Esophagus muscularis mucosa (tissue), 4 donors: ENCODE measurements at regions of chr11 and their contacts with region 1.

Region 1: GRCh38 chr11:2885676-2886081 is at the start of gene CDKN1C:
- DNase-seq: peak; percentile 98
- H3K4me3 ChIP-seq: peak within 1 kb of the TSS; percentile 93 to 97 (median 95)
- H3K27ac ChIP-seq: peak within 1 kb of the TSS; percentile 91 to 96 (median 94)
- H3K4me1 ChIP-seq: peaks cover 34 to 76% (median 58%) of the 10 kb centered on the region in 4 donors
- H3K27me3 ChIP-seq: no peaks in the 10 kb centered on the region
- CTCF ChIP-seq: no peak
- EP300 ChIP-seq: no peak
- POLR2A ChIP-seq: peak; percentile 80
- total RNA-seq, gene CDKN1C: 153 to 349 (median 186) TPM

Region 2: DNA sequence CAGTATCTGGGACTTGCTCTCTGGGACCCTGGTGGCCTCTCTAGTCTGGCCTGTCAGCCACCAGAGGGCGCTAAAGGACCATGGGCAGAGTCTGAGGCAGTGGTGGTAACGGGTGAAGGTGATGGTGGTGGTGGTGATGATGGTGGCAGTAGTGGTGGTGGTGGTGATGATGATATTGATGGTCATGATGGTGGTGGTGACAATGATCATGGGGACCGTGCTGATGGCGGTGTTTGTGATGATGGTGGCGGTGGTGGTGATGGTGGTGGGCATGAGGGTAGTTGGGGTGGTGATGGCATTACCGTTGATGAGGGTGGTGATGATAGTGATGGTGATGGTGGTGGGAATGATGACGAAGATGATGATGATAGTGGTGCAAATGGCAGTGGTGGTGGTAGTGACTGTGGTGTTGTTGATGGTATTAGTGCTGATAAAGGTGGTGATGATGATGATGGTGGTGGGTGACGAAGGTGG is 457.3 kb before region 1 on chr11:
- intact Hi-C with region 1: loop called (anchors 5 kb)
- DNase-seq: no peak
- H3K4me3 ChIP-seq: no peak overlapping the region
- H3K27ac ChIP-seq: no peak overlapping the region
- H3K4me1 ChIP-seq: no peaks in the 10 kb centered on the region
- H3K27me3 ChIP-seq: peaks cover 0 to 35% (median 0%) of the 10 kb centered on the region in 4 donors
- CTCF ChIP-seq: peak; percentile 56 to 69 (median 66)
- EP300 ChIP-seq: no peak
- POLR2A ChIP-seq: no peak

Region 3: GRCh38 chr11:2561696-2562581 is 323.7 kb before region 1 on chr11:
- intact Hi-C with region 1: no loop called
- DNase-seq: no peak
- H3K4me3 ChIP-seq: no peak overlapping the region
- H3K27ac ChIP-seq: no peak overlapping the region
- H3K4me1 ChIP-seq: no peaks in the 10 kb centered on the region
- H3K27me3 ChIP-seq: no peaks in the 10 kb centered on the region
- CTCF ChIP-seq: no peak
- EP300 ChIP-seq: no peak
- POLR2A ChIP-seq: no peak

Region 4: DNA sequence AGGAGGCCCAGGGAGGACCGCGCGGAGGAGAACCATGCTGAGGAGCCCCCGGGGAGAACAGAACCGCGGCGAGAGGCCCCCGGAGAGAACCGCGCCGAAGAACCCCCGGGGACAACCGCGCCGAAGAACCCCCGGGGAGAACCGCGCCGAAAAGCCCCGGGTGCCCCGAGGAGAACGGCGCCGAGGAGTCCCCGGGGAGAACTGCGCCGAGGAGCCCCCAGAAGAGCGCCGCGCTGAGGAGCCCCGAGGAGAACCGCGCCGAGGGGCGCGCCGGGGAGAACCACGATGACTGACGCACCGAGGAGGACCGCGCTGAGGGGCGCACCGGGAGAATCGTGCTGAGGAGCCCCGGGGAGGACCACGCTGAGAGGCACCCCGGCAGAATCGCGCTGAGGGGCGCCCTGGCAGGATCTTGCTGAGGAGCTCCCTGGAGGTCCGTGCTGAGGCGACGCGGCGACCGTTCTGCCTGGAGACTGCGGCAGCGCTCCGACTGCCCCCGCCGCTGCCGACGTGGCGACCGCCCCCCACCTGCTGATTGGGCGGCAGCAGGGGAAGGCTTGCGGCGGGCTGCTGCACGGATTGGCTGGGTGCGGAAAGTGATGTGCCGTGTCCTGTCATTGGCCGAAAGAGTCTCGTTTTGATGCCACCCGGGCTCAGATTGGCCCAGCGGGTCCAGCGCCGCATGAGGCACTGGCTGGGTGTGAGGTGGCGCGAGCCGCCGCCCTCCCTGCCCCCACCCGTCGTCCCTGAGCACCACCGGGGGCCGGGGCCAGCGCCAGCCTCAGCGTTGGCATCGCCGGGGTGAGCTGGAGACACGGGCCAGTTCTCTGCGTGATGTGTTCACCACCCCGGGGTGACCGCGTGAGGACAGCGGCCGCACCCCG is 185.9 kb before region 1 on chr11 and contains the start of gene KCNQ1OT1:
- intact Hi-C with region 1: loop called (anchors 5 kb)
- DNase-seq: peak; percentile 96
- H3K4me3 ChIP-seq: peak within 1 kb of the TSS; percentile 59 to 85 (median 78)
- H3K27ac ChIP-seq: peak within 1 kb of the TSS; percentile 92 to 98 (median 94)
- H3K4me1 ChIP-seq: peaks cover 3 to 38% (median 36%) of the 10 kb centered on the region in 4 donors
- H3K27me3 ChIP-seq: no peaks in the 10 kb centered on the region
- CTCF ChIP-seq: no peak
- EP300 ChIP-seq: no peak
- POLR2A ChIP-seq: peak; percentile 73
- total RNA-seq, gene KCNQ1OT1: 0.66 to 2.5 (median 1.3) TPM

Region 5: DNA sequence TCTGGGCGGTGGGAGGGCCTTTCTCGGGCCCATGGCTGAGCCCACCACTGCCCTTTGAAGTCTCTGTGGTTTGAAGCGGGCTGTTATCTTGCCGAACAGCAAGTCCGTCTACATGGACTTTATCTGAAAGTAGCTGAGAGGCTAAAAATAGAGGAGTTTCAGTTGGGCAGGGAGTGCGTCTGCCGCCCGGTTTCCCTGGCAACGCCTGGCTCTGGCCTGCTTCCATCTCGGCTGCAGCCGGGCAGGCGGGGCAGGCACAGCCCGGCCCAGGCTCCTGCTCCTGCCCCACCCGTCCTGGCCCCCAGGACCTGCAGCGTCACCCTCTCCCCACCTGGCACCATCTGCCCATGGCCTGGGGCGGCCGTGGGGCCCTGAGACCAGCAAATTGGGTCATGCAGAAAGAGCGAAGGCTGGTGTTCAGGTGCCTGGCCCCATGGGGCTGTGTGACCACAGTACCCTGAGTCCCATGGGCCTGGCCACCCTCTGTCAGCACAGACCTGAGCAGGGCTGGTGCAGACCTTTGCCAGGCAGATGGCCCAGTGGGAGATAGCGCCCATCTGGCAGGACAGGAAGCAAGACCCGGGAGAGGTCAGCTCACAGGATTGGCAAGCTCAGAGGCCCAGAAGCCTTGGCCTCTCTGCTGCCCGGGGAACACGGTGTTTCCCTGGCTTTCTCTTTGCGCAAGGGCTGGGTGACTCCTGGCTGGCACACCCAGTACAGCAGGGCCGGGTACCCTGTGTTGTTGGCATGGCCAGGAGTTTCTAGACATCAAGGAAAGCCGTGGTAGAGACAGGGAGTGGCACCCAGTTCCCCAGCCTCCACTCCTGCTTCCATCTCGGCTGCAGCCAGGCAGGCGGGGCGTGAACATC is 106.8 kb before region 1 on chr11:
- intact Hi-C with region 1: loop called (anchors 2 kb)
- DNase-seq: peak; percentile 92
- H3K4me3 ChIP-seq: peak overlapping the region; percentile 20 to 47 (median 36)
- H3K27ac ChIP-seq: peak overlapping the region; percentile 84 to 91 (median 86)
- H3K4me1 ChIP-seq: peaks cover 41 to 52% (median 45%) of the 10 kb centered on the region in 4 donors
- H3K27me3 ChIP-seq: no peaks in the 10 kb centered on the region
- CTCF ChIP-seq: peak; percentile 40 to 72 (median 51)
- EP300 ChIP-seq: peak; percentile 87
- POLR2A ChIP-seq: no peak

Region 6: DNA sequence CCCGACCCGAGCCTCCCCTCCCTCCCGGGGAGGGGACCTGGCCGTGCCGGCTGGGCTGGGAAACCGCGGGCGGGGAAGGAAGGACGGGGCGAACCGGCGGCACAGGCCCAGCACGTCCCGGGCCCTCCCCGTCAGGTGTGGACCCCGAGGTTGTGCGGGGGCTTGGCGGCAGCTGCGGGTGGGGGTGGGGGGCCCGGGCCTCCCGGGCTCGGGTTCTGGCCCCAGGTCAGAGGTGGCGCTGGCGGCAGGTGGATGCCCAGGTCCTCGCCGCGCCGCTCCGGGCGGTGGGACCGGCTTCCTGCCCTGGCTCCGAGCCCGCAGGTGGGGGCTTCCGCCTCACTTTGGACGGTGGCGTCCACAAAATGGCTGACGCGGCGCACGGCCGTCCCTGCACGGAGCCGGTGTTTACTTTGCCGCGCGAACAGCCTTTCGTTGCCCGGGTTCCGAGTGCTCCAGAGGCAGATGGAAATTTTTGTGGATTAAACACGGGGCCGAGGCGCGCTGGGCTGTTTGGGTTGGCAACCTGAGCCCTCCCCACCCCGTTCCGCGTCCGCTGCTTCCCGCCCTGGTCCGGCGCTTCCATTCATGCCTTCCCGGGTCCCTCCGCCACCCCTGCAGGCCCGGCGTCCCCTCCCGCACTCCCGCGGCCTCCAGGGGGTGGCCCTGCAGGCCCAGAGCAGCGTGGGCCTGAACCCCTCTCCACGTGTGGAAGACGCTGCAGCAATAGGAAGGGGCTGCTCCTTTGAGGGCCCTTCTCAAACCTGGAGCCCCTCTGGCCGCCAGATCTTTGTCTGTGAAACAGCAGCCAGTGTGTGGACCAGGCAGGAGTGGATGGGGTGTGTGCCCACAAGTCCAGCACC is 93.9 kb before region 1 on chr11:
- intact Hi-C with region 1: loop called (anchors 5 kb)
- DNase-seq: no peak
- H3K4me3 ChIP-seq: peak overlapping the region; percentile 55 to 63 (median 60)
- H3K27ac ChIP-seq: peak overlapping the region; percentile 70 to 82 (median 74)
- H3K4me1 ChIP-seq: peaks cover 24 to 31% (median 26%) of the 10 kb centered on the region in 4 donors
- H3K27me3 ChIP-seq: no peaks in the 10 kb centered on the region
- CTCF ChIP-seq: no peak
- EP300 ChIP-seq: no peak
- POLR2A ChIP-seq: no peak

Region 7: GRCh38 chr11:2834503-2835273 is 51.0 kb before region 1 on chr11:
- intact Hi-C with region 1: loop called (anchors 5 kb)
- DNase-seq: no peak
- H3K4me3 ChIP-seq: no peak overlapping the region
- H3K27ac ChIP-seq: no peak overlapping the region
- H3K4me1 ChIP-seq: peaks cover 20 to 33% (median 23%) of the 10 kb centered on the region in 4 donors
- H3K27me3 ChIP-seq: no peaks in the 10 kb centered on the region
- CTCF ChIP-seq: no peak
- EP300 ChIP-seq: no peak
- POLR2A ChIP-seq: no peak